T-cell (primary cell): ENCODE measurements at regions of chr14 and their contacts with region 1.

Region 1: DNA sequence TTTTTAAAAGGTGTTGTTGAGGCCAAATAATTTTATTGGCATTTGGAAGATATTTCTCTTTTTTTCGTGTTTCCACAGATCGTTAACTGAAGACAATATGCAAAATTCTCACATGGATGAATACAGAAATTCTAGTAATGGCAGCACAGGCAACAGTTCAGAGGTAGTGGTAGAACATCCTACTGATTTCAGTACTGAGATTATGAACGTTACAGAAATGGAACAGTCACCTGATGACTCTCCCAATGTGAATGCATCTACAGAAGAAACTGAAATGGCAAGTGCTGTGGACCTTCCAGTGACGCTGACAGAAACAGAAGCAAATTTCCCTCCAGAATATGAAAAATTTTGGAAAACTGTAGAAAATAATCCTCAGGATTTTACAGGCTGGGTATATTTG is 11.2 kb downstream of the PRPF39 start:
- DNase-seq: no peak
- ATAC-seq: no peak
- H3K4me3 ChIP-seq: no peak overlapping the region
- H3K4me3 Mint-ChIP-seq: no peak overlapping the region
- H3K27ac ChIP-seq: no peak overlapping the region
- H3K27ac Mint-ChIP-seq: no peak overlapping the region
- H3K4me1 ChIP-seq: no peaks in the 10 kb centered on the region
- H3K4me1 Mint-ChIP-seq: peaks cover 26 to 40% (median 36%) of the 10 kb centered on the region in 3 donors
- H3K27me3 ChIP-seq: no peaks in the 10 kb centered on the region
- H3K27me3 Mint-ChIP-seq: no peaks in the 10 kb centered on the region

Region 2: DNA sequence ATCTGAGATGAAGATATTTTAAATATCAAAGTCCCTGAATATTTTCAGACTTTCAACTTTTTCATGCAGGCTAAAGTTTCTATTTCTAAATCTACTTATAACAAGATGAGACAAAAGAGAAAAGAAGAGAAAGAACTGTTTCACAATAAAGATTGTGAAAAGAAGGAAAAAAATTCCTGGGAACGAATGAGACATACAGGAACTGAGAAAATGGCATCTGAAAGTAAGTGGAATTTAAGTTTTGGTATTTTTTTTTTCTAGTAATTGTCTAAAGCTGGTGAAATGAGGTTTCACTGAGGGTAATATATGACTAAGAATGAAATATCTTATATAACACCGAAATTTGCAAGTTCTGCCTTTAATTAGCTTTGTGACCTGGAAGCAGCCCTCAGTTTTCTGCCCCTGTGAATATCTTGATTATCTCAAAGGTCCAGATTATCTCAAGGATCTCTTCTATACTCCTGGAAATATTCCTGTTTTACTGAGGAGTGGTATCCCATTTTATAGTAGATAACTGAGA is 67.0 kb before region 1 on chr14:
- CTCF ChIA-PET with region 1: no interaction called
- POLR2A ChIA-PET with region 1: no interaction called
- DNase-seq: no peak
- ATAC-seq: no peak
- H3K4me3 ChIP-seq: no peak overlapping the region
- H3K4me3 Mint-ChIP-seq: no peak overlapping the region
- H3K27ac ChIP-seq: no peak overlapping the region
- H3K27ac Mint-ChIP-seq: no peak overlapping the region
- H3K4me1 ChIP-seq: no peaks in the 10 kb centered on the region
- H3K4me1 Mint-ChIP-seq: no peaks in the 10 kb centered on the region
- H3K27me3 ChIP-seq: no peaks in the 10 kb centered on the region
- H3K27me3 Mint-ChIP-seq: no peaks in the 10 kb centered on the region

Region 3: GRCh38 chr14:45112889-45113781 is 18.0 kb after region 1 on chr14:
- CTCF ChIA-PET with region 1: no interaction called
- POLR2A ChIA-PET with region 1: interaction called in 1 of 2 experiments, 11 read pairs
- DNase-seq: no peak
- ATAC-seq: no peak
- H3K4me3 ChIP-seq: no peak overlapping the region
- H3K4me3 Mint-ChIP-seq: no peak overlapping the region
- H3K27ac ChIP-seq: no peak overlapping the region
- H3K27ac Mint-ChIP-seq: peak overlapping the region; percentile 54 to 75
- H3K4me1 ChIP-seq: no peaks in the 10 kb centered on the region
- H3K4me1 Mint-ChIP-seq: peaks cover 7 to 13% (median 8%) of the 10 kb centered on the region in 3 donors
- H3K27me3 ChIP-seq: no peaks in the 10 kb centered on the region
- H3K27me3 Mint-ChIP-seq: no peaks in the 10 kb centered on the region

Region 4: DNA sequence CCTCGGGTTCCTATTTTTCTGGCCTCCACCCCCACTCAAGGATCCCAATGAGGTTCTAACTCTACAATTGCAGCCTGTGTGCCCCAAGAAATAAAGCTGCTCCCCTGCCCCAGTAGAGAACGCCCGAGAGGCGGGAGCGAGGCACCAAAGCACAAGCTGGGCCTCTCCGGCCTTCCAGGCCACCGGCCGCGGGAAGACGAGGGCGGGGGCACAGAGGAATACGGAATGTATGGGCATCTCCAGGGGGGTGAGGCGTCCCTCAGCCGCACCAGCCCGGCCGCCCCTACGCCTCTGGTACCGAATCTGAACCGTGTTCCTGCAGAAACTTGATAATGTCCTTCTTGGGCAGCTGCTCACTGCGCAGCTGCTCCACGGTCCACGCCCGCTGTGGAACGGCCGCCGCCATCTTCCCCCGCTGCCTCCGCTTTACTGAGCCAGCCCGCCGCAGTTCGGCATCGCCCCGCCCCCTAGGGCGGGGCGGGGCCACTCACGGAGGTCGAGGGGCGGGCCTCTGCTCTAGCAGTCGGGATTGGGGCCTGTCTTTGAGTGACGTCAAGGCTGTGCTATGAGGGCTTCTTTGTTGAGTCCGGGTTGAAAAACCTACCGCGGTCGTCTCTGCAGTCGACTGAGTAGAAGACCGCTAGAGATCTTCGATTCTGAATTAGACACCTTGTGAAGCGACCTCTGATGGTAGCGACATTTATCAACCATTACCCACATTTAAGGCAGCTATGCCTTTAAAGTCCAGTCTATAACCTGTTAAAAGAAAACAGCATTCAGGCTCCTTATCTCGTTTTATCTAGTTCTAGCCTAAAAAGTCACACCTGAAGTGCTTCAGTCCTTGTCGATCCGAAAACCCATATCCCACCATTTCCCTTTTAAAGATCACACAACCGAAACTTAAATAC is 39.2 kb after region 1 on chr14 and contains the start of gene FKBP3:
- CTCF ChIA-PET with region 1: no interaction called
- POLR2A ChIA-PET with region 1: interaction called in 1 of 2 experiments, 12 read pairs
- DNase-seq: peak; percentile 89 to 98 (median 96)
- ATAC-seq: peak; percentile 90 to 97 (median 93)
- H3K4me3 ChIP-seq: peak within 1 kb of the TSS; percentile 76 to 94
- H3K4me3 Mint-ChIP-seq: peak within 1 kb of the TSS; percentile 96 to 99 (median 98)
- H3K27ac ChIP-seq: peak within 1 kb of the TSS; percentile 92
- H3K27ac Mint-ChIP-seq: peak within 1 kb of the TSS; percentile 97 to 99
- H3K4me1 ChIP-seq: peaks cover 19 to 29% of the 10 kb centered on the region in 2 experiments
- H3K4me1 Mint-ChIP-seq: peaks cover 53 to 56% (median 55%) of the 10 kb centered on the region in 3 donors
- H3K27me3 ChIP-seq: no peaks in the 10 kb centered on the region
- H3K27me3 Mint-ChIP-seq: no peaks in the 10 kb centered on the region
- total RNA-seq, gene FKBP3: 33.8 to 49.3 (median 45.2) TPM